ENCODE measurements at regions of chrX and their contacts with region 1.

Region 1: DNA sequence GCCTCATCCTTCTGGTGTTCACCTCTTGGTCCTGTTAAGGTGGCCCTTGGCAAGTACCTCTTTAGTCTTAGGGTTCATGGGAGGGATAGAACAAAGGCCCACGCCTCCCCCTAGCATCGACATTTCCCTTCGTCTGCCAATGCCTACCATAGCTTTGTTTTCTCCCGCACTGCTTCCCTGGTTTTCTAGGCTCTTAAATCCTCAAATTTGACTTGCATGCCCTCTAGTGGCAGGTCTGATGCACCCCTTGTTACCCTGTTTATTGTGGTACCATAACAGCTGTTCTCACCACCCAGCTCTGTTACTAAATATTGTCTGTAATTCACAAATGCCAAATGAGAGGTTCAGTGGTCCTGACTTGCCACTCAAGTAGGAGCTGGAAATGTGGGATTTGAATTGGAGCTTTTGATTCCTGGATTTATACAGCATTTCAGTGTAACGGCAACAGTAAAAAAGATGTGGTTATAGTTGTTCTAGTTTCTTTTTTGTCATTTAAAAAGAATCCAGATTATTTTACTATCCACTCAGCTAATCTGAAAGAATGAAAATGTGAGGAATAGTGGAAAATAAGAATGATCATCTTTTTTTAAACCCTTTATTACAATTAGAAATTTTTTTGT is 100.1 kb downstream of the REPS2 start:
- DNase-seq: peak in 13 of 14 experiments; percentile 1 to 57 (median 11)
- ATAC-seq: peak; percentile 37
- H3K4me3 ChIP-seq: no peak overlapping the region
- H3K4me3 Mint-ChIP-seq: no peak overlapping the region
- H3K27ac ChIP-seq: no peak overlapping the region
- H3K27ac Mint-ChIP-seq: no peak overlapping the region
- H3K4me1 ChIP-seq: no peaks in the 10 kb centered on the region
- H3K4me1 Mint-ChIP-seq: no peaks in the 10 kb centered on the region
- H3K27me3 ChIP-seq: no peaks in the 10 kb centered on the region
- H3K27me3 Mint-ChIP-seq: no peaks in the 10 kb centered on the region
- CTCF ChIP-seq: peak; percentile 48

Region 2: GRCh38 chrX:16882702-16883486 is 163.7 kb before region 1 on chrX:
- CTCF ChIA-PET with region 1: interaction called, 17 read pairs
- POLR2A ChIA-PET with region 1: no interaction called
- intact Hi-C with region 1: loop called (anchors 1 kb)
- DNase-seq: peak; percentile 38 to 79 (median 62)
- ATAC-seq: peak; percentile 84
- H3K4me3 ChIP-seq: peak overlapping the region; percentile 63
- H3K4me3 Mint-ChIP-seq: peak overlapping the region; percentile 87
- H3K27ac ChIP-seq: peak overlapping the region in 1 of 2 donors; percentile 50
- H3K27ac Mint-ChIP-seq: peak overlapping the region; percentile 81
- H3K4me1 ChIP-seq: peaks cover 12% of the 10 kb centered on the region
- H3K4me1 Mint-ChIP-seq: peaks cover 4% of the 10 kb centered on the region
- H3K27me3 ChIP-seq: peaks cover 0 to 4% of the 10 kb centered on the region in 2 experiments
- H3K27me3 Mint-ChIP-seq: no peaks in the 10 kb centered on the region
- CTCF ChIP-seq: peak; percentile 70

Measured in CD4-positive, alpha-beta T cell (primary cell).